Spleen (tissue), 13 donors: ENCODE measurements at regions of chr11 and their contacts with region 1.

Region 1: GRCh38 chr11:128776424-128777284 is 82.8 kb downstream of the FLI1 start:
- DNase-seq: no peak
- H3K4me3 ChIP-seq: no peak overlapping the region
- H3K27ac ChIP-seq: peak overlapping the region in 7 of 8 donors; percentile 41 to 81 (median 73)
- H3K4me1 ChIP-seq: peaks cover 32 to 92% (median 65%) of the 10 kb centered on the region in 6 donors
- H3K27me3 ChIP-seq: no peaks in the 10 kb centered on the region
- CTCF ChIP-seq: peak in 8 of 11 experiments; percentile 25 to 61 (median 53)
- POLR2A ChIP-seq: no peak

Region 2: DNA sequence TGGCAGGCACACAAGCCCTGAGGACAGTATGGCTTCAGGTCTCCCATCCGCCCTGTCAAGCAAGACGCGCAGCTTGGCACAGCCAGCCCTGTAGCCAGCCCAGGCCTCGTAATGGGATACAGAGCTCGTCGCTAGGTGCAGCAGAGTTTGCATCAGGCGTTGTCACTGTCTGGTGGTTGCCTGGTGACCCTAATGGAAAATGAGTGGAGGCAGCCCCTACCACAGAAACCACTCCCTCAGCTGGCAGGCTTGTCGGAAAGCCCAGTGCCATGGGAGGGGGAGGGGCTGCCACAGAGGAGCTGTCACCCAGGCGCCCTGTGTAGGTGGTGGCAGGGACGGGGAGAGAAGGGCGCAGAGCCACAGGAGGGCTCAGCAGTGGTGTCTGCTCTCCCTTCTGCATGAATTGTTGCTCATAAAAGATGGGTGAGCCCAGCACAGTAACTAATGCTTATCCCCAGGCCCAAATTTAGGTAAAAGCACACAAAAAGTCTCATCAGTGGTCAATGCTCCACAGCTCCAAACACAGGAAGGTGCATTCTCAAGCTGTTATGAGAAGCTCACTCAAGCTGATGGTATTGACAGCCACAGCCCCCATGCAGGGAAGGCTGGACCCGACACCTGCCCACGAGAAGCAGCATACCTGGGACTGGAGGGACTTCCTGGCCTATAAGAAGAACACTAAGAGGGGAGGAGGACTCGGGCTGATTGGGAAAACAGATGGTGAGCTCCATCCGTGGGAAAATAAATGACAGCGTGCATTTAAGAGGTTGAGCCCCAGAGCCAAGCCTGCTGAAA is 353.9 kb before region 1 on chr11:
- intact Hi-C with region 1: no loop called
- DNase-seq: peak; percentile 82
- H3K4me3 ChIP-seq: no peak overlapping the region
- H3K27ac ChIP-seq: peak overlapping the region in 5 of 8 donors; percentile 0 to 69 (median 62)
- H3K4me1 ChIP-seq: peaks cover 2 to 47% (median 24%) of the 10 kb centered on the region in 6 donors
- H3K27me3 ChIP-seq: no peaks in the 10 kb centered on the region
- CTCF ChIP-seq: no peak
- POLR2A ChIP-seq: no peak

Region 3: GRCh38 chr11:128686745-128687177 is 89.9 kb before region 1 on chr11:
- intact Hi-C with region 1: no loop called
- DNase-seq: peak; percentile 92
- H3K4me3 ChIP-seq: peak overlapping the region; percentile 10 to 68 (median 46)
- H3K27ac ChIP-seq: peak overlapping the region in 7 of 8 donors; percentile 19 to 67 (median 40)
- H3K4me1 ChIP-seq: peaks cover 25 to 87% (median 55%) of the 10 kb centered on the region in 6 donors
- H3K27me3 ChIP-seq: peaks cover 0 to 45% (median 16%) of the 10 kb centered on the region in 7 donors
- CTCF ChIP-seq: no peak
- POLR2A ChIP-seq: no peak

Region 4: DNA sequence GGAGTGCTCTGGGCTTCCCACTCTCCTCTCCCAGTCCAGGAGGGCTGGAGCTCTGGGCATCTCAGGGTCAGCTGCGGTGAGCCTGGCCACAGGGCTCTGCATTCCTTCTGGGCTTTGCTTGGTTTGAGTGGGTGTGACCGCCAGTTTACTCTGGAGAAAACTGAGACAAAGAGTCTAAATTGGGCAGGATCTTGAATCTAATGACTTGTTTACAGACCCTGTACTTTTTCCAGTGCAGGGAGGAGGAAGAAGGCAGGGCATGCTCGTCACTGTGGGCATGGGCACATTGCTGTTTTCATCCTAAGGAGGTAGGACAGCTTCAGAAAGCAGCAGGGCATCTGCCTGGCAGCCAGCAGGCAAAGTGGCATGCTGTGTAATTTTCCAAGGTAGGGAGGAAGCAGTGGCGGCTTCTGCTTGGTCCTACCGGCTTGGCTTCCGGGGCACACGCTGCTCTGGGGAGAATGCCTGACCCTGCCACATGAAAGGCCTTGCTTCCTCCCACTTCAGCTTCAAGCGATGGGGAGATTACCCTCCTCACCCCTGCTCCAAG is 59.9 kb before region 1 on chr11:
- intact Hi-C with region 1: no loop called
- DNase-seq: peak; percentile 82
- H3K4me3 ChIP-seq: peak overlapping the region in 5 of 8 donors; percentile 5 to 57 (median 10)
- H3K27ac ChIP-seq: peak overlapping the region; percentile 62 to 100 (median 90)
- H3K4me1 ChIP-seq: peaks cover 92 to 100% (median 100%) of the 10 kb centered on the region in 6 donors
- H3K27me3 ChIP-seq: no peaks in the 10 kb centered on the region
- CTCF ChIP-seq: no peak
- POLR2A ChIP-seq: no peak

Region 5: DNA sequence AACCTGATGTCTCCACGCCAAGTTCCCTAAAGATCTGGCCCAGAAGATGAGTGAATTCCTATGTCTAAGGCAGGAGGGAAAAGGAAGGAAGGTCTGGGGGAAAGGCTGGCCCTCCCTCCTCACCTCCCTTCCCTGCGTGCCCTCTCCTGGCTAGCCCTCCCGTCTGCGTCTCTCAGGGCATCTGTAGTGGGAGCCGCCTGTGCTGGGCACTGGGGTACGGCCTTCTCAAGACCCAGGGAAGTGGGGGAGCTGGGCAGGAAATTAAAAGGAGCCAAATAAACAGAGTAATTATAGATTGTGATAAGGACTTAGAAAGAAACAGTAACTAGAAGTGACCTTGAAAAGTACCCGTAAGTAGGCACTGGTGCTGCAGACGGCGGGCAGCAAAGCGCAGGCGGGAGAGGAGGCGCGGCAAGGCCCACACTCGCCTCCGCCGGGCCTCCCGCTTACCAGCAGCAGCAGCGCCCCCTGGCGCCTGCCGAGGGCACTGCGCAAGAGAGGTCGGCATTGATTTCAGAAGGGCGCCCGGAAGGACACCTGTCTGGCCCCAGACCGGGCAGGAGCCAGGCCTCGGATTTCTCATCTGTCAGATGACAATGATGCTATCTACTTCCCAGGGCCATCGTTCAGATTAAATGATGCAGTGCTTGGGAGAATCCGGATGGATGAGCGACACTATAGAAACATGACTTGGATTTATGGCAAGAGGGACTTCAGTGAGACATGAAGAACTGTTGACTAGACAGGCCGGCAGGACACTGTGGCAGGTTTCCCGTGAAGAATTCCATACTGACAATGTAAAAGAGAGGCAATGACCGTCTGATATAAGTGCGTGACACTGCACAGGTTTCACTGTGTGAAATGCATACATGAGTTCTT is 83.1 kb after region 1 on chr11:
- intact Hi-C with region 1: loop called (anchors 10 kb)
- DNase-seq: peak; percentile 96
- H3K4me3 ChIP-seq: no peak overlapping the region
- H3K27ac ChIP-seq: peak overlapping the region in 5 of 8 donors; percentile 28 to 55 (median 44)
- H3K4me1 ChIP-seq: peaks cover 0 to 28% (median 19%) of the 10 kb centered on the region in 6 donors
- H3K27me3 ChIP-seq: no peaks in the 10 kb centered on the region
- CTCF ChIP-seq: peak; percentile 81 to 99 (median 94)
- POLR2A ChIP-seq: no peak

Region 6: GRCh38 chr11:129215506-129216245 is 439.0 kb after region 1 on chr11:
- intact Hi-C with region 1: no loop called
- DNase-seq: no peak
- H3K4me3 ChIP-seq: no peak overlapping the region
- H3K27ac ChIP-seq: no peak overlapping the region
- H3K4me1 ChIP-seq: peaks cover 0 to 4% (median 0%) of the 10 kb centered on the region in 6 donors
- H3K27me3 ChIP-seq: no peaks in the 10 kb centered on the region
- CTCF ChIP-seq: no peak
- POLR2A ChIP-seq: no peak